Caco-2 (cell line): ENCODE measurements at regions of chr17 and their contacts with region 1.

Region 1: GRCh38 chr17:59796785-59797205 is 89.3 kb downstream of the VMP1 start:
- DNase-seq: no peak
- H3K4me3 ChIP-seq: no peak overlapping the region
- H3K4me3 Mint-ChIP-seq: no peak overlapping the region
- H3K27ac Mint-ChIP-seq: no peak overlapping the region
- H3K4me1 ChIP-seq: peaks cover 8% of the 10 kb centered on the region
- H3K4me1 Mint-ChIP-seq: peaks cover 7% of the 10 kb centered on the region
- H3K27me3 ChIP-seq: no peaks in the 10 kb centered on the region
- H3K27me3 Mint-ChIP-seq: no peaks in the 10 kb centered on the region
- CTCF ChIP-seq: no peak

Region 2: DNA sequence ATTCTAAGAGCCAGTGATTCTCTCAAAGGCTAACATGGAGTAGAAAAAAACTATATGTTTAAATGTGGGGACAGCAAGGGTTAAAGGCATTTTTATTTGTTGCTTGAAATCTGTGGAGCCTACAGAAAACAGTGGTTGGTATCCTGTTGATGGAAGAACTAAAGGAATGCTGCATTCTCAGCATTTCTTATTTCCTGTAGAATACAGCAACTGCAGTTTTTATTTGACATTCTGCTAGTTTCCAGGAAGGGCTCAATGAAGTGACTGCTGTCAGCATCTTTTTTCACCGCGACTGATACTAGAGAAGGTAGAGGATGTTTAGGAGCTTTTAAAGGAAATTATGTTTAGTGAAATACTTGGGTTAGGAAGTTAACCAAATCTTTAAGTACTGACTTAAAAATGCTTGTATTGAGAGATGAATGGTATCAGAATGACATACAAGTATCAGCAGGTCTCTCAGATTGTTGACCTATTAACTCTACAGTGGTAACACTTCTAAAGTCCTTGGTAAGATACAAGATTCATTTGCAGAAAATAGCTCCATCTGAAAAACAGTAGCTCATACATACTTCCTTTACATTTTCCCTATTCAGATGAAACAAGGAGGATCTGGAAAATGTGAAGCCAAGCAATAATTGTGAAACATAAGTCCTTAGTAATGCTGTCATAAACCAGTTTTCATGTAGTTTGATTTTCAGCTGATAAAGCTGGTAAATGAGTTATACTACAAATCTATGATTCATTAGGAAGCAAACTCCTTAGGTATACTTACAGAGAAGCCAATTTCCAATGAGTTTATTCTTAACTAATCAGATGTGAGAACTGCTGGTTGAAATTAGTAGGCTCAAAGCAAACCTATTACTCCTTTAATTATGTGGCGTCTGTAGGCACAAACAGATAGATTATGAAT is 161.9 kb before region 1 on chr17:
- CTCF ChIA-PET with region 1: no interaction called
- POLR2A ChIA-PET with region 1: no interaction called
- intact Hi-C with region 1: no loop called
- DNase-seq: no peak
- H3K4me3 ChIP-seq: no peak overlapping the region
- H3K4me3 Mint-ChIP-seq: no peak overlapping the region
- H3K27ac Mint-ChIP-seq: no peak overlapping the region
- H3K4me1 ChIP-seq: no peaks in the 10 kb centered on the region; the same call in 1 of the 2 replicates
- H3K4me1 Mint-ChIP-seq: peaks cover 7% of the 10 kb centered on the region
- H3K27me3 ChIP-seq: no peaks in the 10 kb centered on the region
- H3K27me3 Mint-ChIP-seq: no peaks in the 10 kb centered on the region
- CTCF ChIP-seq: no peak

Region 3: DNA sequence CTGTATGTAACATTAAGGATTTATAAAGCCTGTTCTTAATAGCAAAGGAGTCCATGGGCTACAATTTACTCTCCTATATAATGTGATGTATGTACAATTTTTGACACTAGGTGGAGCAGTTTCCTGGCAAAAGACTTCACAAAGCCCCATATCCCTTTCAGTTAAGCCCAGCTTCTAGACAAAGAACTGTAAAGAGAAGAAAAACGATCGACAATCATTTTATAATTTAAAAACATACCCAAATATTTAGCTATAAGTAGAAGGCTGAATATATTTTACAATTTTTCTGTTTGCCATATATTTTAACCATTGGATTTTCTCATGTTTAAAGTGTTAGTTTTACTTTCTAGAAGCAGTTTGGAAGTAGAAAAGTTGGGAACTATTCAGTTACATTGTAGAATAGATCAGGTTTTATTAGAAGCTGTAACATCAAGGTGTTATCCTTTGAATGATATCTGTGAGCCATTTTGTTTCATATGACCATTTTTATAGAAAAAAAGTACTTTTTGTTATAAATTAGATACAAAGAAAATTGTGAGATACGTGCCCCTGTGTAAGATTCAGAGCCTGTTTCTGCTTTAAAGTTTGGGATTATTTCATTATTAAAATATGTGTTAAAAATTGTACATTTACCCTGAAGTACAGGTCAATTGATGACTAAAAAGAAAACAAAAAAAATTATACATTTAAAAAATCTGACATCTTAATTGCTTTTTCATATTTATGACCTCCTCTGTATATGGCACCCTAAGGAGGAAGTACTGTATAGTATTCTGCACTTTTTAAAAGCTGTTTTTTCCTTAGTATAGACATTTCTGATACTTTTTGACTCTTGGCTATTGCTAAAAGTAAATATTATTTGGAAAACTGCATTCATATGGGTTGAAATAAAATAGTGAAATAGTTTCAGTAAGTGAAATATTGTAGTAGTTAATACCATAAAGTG is 43.0 kb before region 1 on chr17:
- CTCF ChIA-PET with region 1: no interaction called
- POLR2A ChIA-PET with region 1: no interaction called
- intact Hi-C with region 1: no loop called
- DNase-seq: peak in 1 of 2 experiments; percentile 77
- H3K4me3 ChIP-seq: no peak overlapping the region
- H3K4me3 Mint-ChIP-seq: peak overlapping the region; percentile 60
- H3K27ac Mint-ChIP-seq: peak overlapping the region; percentile 89
- H3K4me1 ChIP-seq: peaks cover 45% of the 10 kb centered on the region
- H3K4me1 Mint-ChIP-seq: peaks cover 45% of the 10 kb centered on the region
- H3K27me3 ChIP-seq: no peaks in the 10 kb centered on the region
- H3K27me3 Mint-ChIP-seq: no peaks in the 10 kb centered on the region
- CTCF ChIP-seq: peak; percentile 62 to 64

Region 4: GRCh38 chr17:59775734-59776645 is 20.8 kb before region 1 on chr17:
- CTCF ChIA-PET with region 1: interaction called, 5 read pairs
- POLR2A ChIA-PET with region 1: interaction called, 4 read pairs
- intact Hi-C with region 1: loop called (anchors 2 kb)
- DNase-seq: no peak
- H3K4me3 ChIP-seq: no peak overlapping the region
- H3K4me3 Mint-ChIP-seq: no peak overlapping the region
- H3K27ac Mint-ChIP-seq: no peak overlapping the region
- H3K4me1 ChIP-seq: peaks cover 19% of the 10 kb centered on the region
- H3K4me1 Mint-ChIP-seq: peaks cover 21% of the 10 kb centered on the region
- H3K27me3 ChIP-seq: no peaks in the 10 kb centered on the region
- H3K27me3 Mint-ChIP-seq: no peaks in the 10 kb centered on the region
- CTCF ChIP-seq: no peak